Panc1 (cell line): ENCODE measurements at regions of chr11 and their contacts with region 1.

Region 1: DNA sequence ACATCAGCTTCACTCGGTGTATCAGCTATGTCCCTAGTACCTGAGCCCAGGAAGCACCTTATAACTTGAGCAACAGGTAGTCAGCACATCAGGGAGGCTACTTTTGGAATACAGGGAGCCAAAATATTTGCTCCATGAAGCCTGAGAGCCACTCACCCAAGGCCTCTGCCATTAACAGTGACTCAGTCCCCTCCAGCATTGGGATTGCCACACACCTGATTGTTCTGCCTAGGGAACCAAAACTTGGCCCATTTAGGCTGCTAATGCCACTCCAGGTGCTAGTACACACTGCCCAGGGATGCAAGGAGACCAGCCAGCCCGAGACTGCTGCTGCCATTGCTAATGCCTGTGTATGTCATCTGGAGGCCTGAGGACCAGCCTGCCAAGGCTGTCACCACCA is 773.6 kb upstream of the TENM4 start:
- DNase-seq: no peak
- ATAC-seq: no peak
- H3K4me3 ChIP-seq: no peak overlapping the region
- H3K27ac ChIP-seq: no peak overlapping the region
- H3K4me1 ChIP-seq: no peaks in the 10 kb centered on the region
- H3K27me3 ChIP-seq: no peaks in the 10 kb centered on the region
- CTCF ChIP-seq: no peak

Region 2: GRCh38 chr11:80122211-80122610 is 92.2 kb before region 1 on chr11:
- CTCF ChIA-PET with region 1: no interaction called
- POLR2A ChIA-PET with region 1: no interaction called
- in situ Hi-C with region 1: no loop called
- intact Hi-C with region 1: loop called (anchors 5 kb)
- DNase-seq: no peak
- ATAC-seq: no peak
- H3K4me3 ChIP-seq: no peak overlapping the region
- H3K27ac ChIP-seq: no peak overlapping the region
- H3K4me1 ChIP-seq: no peaks in the 10 kb centered on the region
- H3K27me3 ChIP-seq: no peaks in the 10 kb centered on the region
- CTCF ChIP-seq: no peak